Prostate gland (tissue), 2 donors: ENCODE measurements at regions of chr12 and their contacts with region 1.

Region 1: GRCh38 chr12:32659908-32660440 is 19.1 kb upstream of the DNM1L start:
- DNase-seq: peak; percentile 48
- H3K4me3 ChIP-seq: no peak overlapping the region
- H3K27ac ChIP-seq: peak overlapping the region; percentile 7 to 33
- H3K4me1 ChIP-seq: no peaks in the 10 kb centered on the region
- H3K27me3 ChIP-seq: no peaks in the 10 kb centered on the region
- CTCF ChIP-seq: no peak
- POLR2A ChIP-seq: no peak

Region 2: GRCh38 chr12:31456562-31456961 is 1203.4 kb before region 1 on chr12:
- intact Hi-C with region 1: no loop called
- DNase-seq: no peak
- H3K4me3 ChIP-seq: no peak overlapping the region
- H3K27ac ChIP-seq: no peak overlapping the region
- H3K4me1 ChIP-seq: no peaks in the 10 kb centered on the region
- H3K27me3 ChIP-seq: no peaks in the 10 kb centered on the region
- CTCF ChIP-seq: no peak
- POLR2A ChIP-seq: no peak

Region 3: DNA sequence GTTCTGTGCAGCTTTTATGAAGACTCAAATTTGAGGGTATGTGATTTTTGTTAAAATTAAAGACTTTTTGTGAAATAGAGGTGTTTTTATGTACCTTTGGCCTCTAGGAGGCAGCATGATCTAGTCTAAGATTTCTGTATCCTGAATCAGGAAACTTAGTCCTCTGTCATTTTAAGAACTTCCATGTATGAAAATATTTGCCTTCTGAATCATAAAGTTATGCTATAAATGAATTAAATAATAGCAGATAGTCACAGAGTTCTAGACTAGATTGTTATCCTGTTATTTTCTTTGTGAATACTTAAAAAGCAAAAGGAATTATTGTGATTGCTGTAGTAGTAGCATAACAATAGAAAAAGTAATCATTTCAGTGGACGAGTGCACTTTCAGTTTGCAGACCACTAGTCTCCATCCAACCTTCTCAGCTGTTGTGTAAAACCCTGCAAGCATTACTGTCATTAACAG is 204.3 kb before region 1 on chr12:
- intact Hi-C with region 1: loop called (anchors 5 kb)
- DNase-seq: peak; percentile 40
- H3K4me3 ChIP-seq: peak overlapping the region in 1 of 2 donors; percentile 9
- H3K27ac ChIP-seq: peak overlapping the region; percentile 38 to 48
- H3K4me1 ChIP-seq: peaks cover 14% of the 10 kb centered on the region
- H3K27me3 ChIP-seq: no peaks in the 10 kb centered on the region
- CTCF ChIP-seq: peak in 3 of 4 experiments; percentile 70 to 77 (median 76)
- POLR2A ChIP-seq: no peak

Region 4: DNA sequence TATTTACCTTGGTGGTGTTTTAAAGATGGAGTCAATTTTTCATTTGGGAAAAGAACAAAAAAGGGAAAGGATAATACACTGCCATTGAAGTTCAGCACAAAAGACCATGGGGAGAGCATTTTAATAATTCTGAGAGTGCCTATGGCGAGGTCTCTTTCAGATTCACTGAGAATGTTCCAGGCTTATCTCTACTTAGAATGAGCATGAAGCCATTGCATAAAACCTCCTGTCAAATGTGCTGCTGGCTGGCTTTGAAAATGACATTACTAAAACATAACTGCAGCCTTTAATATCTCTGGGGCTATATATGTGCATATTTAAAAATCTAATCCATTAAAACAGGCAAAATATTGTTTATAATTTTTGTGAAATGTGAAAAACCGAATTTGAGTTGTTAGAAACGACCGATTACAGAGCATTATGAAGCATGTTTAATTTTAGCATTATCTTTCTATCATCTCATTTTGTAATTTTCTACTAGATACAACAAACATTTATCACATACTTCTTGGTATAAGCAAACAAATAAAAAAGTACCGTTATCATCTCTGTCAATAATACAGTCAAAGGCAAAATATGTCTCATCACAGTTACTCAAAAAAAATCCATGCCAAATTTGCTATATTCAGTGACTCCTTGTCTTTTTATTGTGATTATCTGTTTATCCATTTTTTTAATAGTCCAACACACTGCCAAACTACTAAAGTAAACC is 141.5 kb after region 1 on chr12:
- intact Hi-C with region 1: no loop called
- DNase-seq: no peak
- H3K4me3 ChIP-seq: no peak overlapping the region
- H3K27ac ChIP-seq: no peak overlapping the region
- H3K4me1 ChIP-seq: no peaks in the 10 kb centered on the region
- H3K27me3 ChIP-seq: no peaks in the 10 kb centered on the region
- CTCF ChIP-seq: no peak
- POLR2A ChIP-seq: no peak